Common myeloid progenitor, CD34-positive (primary cell): ENCODE measurements at regions of chr14 and their contacts with region 1.

Region 1: GRCh38 chr14:39232554-39233415 is 930 bp upstream of the MIA2 start:
- DNase-seq: peak; percentile 25 to 71 (median 71)
- H3K4me3 ChIP-seq: peak overlapping the region in 1 of 7 experiments; percentile 34
- H3K27ac ChIP-seq: peak overlapping the region in 1 of 2 experiments; percentile 54
- H3K4me1 ChIP-seq: peaks cover 0 to 22% (median 12%) of the 10 kb centered on the region in 4 experiments
- H3K27me3 ChIP-seq: no peaks in the 10 kb centered on the region

Region 2: DNA sequence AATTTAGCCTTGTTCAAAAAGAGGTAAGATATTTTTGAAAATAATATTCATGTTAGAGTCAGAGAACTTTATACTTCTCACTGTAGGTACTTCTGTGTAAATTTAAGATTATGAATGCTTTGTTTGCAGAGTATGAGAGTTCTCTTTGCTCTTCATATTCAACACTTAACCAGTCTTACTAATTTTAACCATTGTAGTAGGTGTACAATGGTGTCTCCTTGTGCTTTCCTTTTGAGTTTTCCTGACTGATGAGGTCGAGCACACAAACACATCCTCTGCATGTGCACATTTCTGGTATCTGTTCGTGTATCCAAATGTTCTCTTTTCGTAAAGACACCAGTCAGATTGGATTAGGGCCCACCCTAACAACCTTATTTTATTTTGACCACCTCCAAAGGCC is 46.7 kb after region 1 on chr14:
- CTCF ChIA-PET with region 1: no interaction called
- POLR2A ChIA-PET with region 1: no interaction called
- DNase-seq: no peak
- H3K4me3 ChIP-seq: no peak overlapping the region
- H3K27ac ChIP-seq: no peak overlapping the region
- H3K4me1 ChIP-seq: peaks cover 0 to 2% (median 0%) of the 10 kb centered on the region in 4 experiments
- H3K27me3 ChIP-seq: no peaks in the 10 kb centered on the region

Region 3: DNA sequence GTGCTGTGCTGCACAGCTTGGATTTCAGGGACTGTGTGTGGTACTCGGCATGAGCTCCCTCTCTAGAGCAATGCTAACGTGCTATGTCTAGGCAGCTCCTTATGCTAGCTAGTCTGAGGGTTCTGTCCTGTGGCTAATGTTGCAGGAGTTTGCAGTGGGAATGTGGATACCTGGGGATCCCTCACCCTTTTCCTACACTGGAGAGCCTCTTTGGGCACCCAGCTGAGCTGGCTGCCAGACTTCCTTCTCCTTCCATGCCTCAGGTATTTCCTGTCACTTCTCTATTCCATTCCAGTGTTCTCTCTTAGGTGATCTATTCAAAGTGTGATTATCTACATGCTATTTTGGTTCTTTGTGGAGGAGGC is 134.6 kb after region 1 on chr14:
- CTCF ChIA-PET with region 1: interaction called, 14 read pairs
- POLR2A ChIA-PET with region 1: no interaction called
- DNase-seq: no peak
- H3K4me3 ChIP-seq: no peak overlapping the region
- H3K27ac ChIP-seq: no peak overlapping the region
- H3K4me1 ChIP-seq: no peaks in the 10 kb centered on the region
- H3K27me3 ChIP-seq: no peaks in the 10 kb centered on the region

Region 4: GRCh38 chr14:39426605-39427004 is 193.8 kb after region 1 on chr14:
- CTCF ChIA-PET with region 1: interaction called, 13 read pairs
- POLR2A ChIA-PET with region 1: no interaction called
- DNase-seq: peak; percentile 31 to 63 (median 61)
- H3K4me3 ChIP-seq: peak overlapping the region in 1 of 7 experiments; percentile 19
- H3K27ac ChIP-seq: no peak overlapping the region
- H3K4me1 ChIP-seq: peaks cover 11 to 38% (median 31%) of the 10 kb centered on the region in 4 experiments
- H3K27me3 ChIP-seq: no peaks in the 10 kb centered on the region

Region 5: DNA sequence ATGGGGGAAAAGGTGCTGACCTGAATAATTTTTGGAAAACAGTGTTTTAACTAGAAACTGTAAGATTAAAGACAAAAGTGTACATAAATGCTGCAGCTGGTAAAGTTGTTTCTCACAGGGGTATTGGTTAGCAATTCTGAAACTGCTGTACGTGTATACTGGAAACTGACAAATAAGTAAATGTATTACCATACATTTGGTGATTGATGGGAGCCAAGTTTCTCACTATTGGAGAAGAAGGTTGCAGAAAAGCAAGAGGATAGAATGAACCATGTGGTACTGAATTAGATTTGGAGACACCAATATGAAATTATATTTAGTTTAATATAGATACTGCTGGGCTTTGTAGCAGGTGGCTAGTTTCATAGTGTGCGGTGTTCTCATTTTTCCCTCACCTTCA is 219.0 kb after region 1 on chr14:
- CTCF ChIA-PET with region 1: no interaction called
- POLR2A ChIA-PET with region 1: no interaction called
- DNase-seq: no peak
- H3K4me3 ChIP-seq: no peak overlapping the region
- H3K27ac ChIP-seq: no peak overlapping the region
- H3K4me1 ChIP-seq: no peaks in the 10 kb centered on the region
- H3K27me3 ChIP-seq: peaks cover 0 to 3% (median 0%) of the 10 kb centered on the region in 5 experiments

Region 6: GRCh38 chr14:39469094-39469710 is 236.4 kb after region 1 on chr14:
- CTCF ChIA-PET with region 1: interaction called, 22 read pairs
- POLR2A ChIA-PET with region 1: no interaction called
- DNase-seq: peak; percentile 54 to 76 (median 72)
- H3K4me3 ChIP-seq: no peak overlapping the region
- H3K27ac ChIP-seq: no peak overlapping the region
- H3K4me1 ChIP-seq: no peaks in the 10 kb centered on the region
- H3K27me3 ChIP-seq: no peaks in the 10 kb centered on the region